ENCODE measurements at regions of chr3 and their contacts with region 1.

Region 1: DNA sequence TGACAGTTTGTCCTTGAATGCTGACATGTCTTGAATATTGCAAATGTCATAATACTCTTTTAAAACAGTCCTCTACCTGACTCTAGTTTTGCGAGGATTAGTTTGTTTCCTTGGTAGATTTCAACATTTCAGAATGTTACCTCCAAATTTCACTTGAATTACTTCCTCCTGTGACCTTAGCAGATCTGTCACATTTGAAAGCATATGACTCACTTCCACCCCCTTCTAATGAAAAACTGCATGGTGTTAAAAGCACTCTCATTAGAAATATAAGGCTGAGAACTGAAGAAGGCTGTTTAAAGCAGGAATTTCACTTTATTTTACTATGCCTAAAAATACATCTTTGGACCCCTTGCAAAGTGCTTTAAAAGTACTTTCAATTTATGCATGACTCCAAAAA is 598.7 kb upstream of the TGFBR2 start:
- DNase-seq: peak; percentile 30
- ATAC-seq: peak; percentile 25
- H3K4me3 ChIP-seq: no peak overlapping the region
- H3K27ac ChIP-seq: no peak overlapping the region
- H3K4me1 ChIP-seq: peaks cover 36% of the 10 kb centered on the region
- H3K27me3 ChIP-seq: no peaks in the 10 kb centered on the region
- CTCF ChIP-seq: no peak

Region 2: GRCh38 chr3:28853830-28854229 is 1153.8 kb before region 1 on chr3:
- CTCF ChIA-PET with region 1: no interaction called
- POLR2A ChIA-PET with region 1: no interaction called
- intact Hi-C with region 1: loop called (anchors 10 kb)
- DNase-seq: peak; percentile 46
- ATAC-seq: peak; percentile 67
- H3K4me3 ChIP-seq: no peak overlapping the region
- H3K27ac ChIP-seq: no peak overlapping the region
- H3K4me1 ChIP-seq: peaks cover 5% of the 10 kb centered on the region; the same call in 1 of the 2 replicates
- H3K27me3 ChIP-seq: no peaks in the 10 kb centered on the region
- CTCF ChIP-seq: peak; percentile 58

Region 3: GRCh38 chr3:29914861-29915524 is 92.7 kb before region 1 on chr3:
- CTCF ChIA-PET with region 1: interaction called, 3 read pairs
- POLR2A ChIA-PET with region 1: no interaction called
- intact Hi-C with region 1: loop called (anchors 2 kb)
- DNase-seq: peak; percentile 85
- ATAC-seq: peak; percentile 42
- H3K4me3 ChIP-seq: peak overlapping the region; percentile 13; the same call in 1 of the 2 replicates
- H3K27ac ChIP-seq: peak overlapping the region; percentile 84
- H3K4me1 ChIP-seq: peaks cover 55% of the 10 kb centered on the region
- H3K27me3 ChIP-seq: no peaks in the 10 kb centered on the region
- CTCF ChIP-seq: no peak

Region 4: GRCh38 chr3:29936054-29936453 is 71.6 kb before region 1 on chr3:
- CTCF ChIA-PET with region 1: no interaction called
- POLR2A ChIA-PET with region 1: no interaction called
- intact Hi-C with region 1: no loop called
- DNase-seq: peak; percentile 39
- ATAC-seq: no peak; the same call in 1 of the 2 replicates
- H3K4me3 ChIP-seq: no peak overlapping the region
- H3K27ac ChIP-seq: no peak overlapping the region
- H3K4me1 ChIP-seq: peaks cover 29% of the 10 kb centered on the region
- H3K27me3 ChIP-seq: no peaks in the 10 kb centered on the region
- CTCF ChIP-seq: no peak

Region 5: GRCh38 chr3:29978036-29978435 is 29.6 kb before region 1 on chr3:
- CTCF ChIA-PET with region 1: no interaction called
- POLR2A ChIA-PET with region 1: no interaction called
- intact Hi-C with region 1: no loop called
- DNase-seq: peak; percentile 11
- ATAC-seq: no peak; the same call in 1 of the 2 replicates
- H3K4me3 ChIP-seq: no peak overlapping the region
- H3K27ac ChIP-seq: no peak overlapping the region
- H3K4me1 ChIP-seq: no peaks in the 10 kb centered on the region
- H3K27me3 ChIP-seq: no peaks in the 10 kb centered on the region
- CTCF ChIP-seq: no peak

Region 6: DNA sequence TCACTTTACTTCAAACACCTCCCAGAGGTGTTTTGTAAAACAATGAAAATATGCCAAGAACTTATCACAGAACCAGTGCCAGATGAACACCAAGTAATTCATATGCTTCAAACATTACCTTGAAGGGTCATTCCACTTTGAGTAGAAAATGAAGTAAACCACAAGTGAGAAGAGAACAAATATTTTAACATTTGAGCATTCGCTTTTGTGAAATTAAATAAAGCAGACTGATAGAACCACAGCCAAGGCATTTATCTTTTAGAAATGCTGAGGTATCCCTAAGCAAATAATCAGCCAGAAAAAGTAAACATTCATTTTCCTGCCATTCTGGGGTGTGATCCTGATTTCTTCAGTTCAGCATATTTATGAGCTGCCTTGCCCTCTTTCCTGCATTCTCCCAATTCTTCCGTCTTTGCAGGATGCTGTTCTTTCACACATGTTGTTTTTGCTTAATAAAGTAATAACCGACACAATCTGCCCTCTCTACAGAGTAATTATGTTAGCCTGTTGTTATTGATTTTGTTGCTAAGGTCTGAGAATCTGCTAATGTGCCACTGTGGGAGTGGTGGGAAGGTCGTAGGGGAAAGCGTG is 363.1 kb after region 1 on chr3:
- CTCF ChIA-PET with region 1: interaction called, 16 read pairs
- POLR2A ChIA-PET with region 1: no interaction called
- intact Hi-C with region 1: no loop called
- DNase-seq: peak; percentile 83
- ATAC-seq: peak; percentile 94
- H3K4me3 ChIP-seq: no peak overlapping the region
- H3K27ac ChIP-seq: peak overlapping the region; percentile 39
- H3K4me1 ChIP-seq: peaks cover 30% of the 10 kb centered on the region
- H3K27me3 ChIP-seq: no peaks in the 10 kb centered on the region
- CTCF ChIP-seq: no peak

Measured in PC-3 (cell line).